Panc1 (cell line): ENCODE measurements at regions of chr1 and their contacts with region 1.

Region 1: DNA sequence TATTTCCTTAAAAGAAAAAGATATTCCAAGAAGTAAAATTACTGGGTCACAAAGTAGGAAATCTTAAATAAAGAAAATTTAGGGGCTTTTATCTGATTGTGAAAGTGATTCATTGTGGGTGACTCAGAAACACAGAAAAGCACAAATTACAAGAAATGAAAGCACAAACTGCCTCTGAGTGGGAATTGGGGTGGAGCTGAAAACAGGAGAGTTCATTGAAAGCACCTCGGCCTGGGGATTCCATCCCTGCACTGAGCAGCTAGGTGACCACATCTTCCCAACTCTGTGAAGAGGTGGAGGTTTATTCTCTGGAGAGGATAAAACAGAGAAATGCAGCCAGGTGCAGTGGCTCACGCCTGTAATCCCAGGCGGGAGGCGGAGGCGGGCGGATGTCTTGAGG is 7.4 kb downstream of the GJA4 start:
- DNase-seq: no peak
- ATAC-seq: no peak
- H3K4me3 ChIP-seq: no peak overlapping the region
- H3K27ac ChIP-seq: no peak overlapping the region
- H3K4me1 ChIP-seq: no peaks in the 10 kb centered on the region
- H3K27me3 ChIP-seq: no peaks in the 10 kb centered on the region
- CTCF ChIP-seq: no peak

Region 2: DNA sequence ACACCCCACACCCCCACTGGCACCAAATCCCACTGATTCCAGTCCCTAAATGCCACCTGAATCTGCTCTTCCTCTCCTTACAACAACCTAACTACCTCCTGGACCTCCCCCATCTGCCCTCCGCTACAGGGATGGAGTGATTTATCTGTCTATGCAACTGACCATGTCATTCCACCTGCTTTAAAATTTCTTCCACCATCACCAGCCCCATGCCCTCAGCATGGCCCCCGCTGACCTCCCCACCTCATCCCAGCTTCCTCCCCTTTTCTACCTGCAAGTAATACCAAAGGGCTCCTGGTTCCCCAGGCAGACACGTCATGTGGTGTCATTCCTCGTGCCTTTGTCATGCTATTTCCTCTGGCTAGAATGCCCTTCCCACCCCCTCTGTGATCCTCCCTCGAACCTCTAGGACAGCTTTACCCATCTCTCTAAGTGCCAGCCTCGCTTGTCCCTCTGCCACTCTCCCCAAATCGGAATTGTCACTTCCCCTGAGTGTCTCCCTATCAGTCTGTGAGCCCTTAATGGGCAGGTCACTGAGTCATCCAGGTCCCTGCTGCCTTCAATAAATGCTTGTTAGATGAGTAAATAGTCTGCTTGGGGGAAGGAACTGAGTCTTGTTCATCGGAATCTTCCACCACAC is 37.0 kb before region 1 on chr1:
- CTCF ChIA-PET with region 1: no interaction called
- POLR2A ChIA-PET with region 1: no interaction called
- in situ Hi-C with region 1: no loop called
- intact Hi-C with region 1: no loop called
- DNase-seq: peak; percentile 82
- ATAC-seq: peak; percentile 89
- H3K4me3 ChIP-seq: no peak overlapping the region
- H3K27ac ChIP-seq: no peak overlapping the region
- H3K4me1 ChIP-seq: no peaks in the 10 kb centered on the region; the same call in 1 of the 2 replicates
- H3K27me3 ChIP-seq: no peaks in the 10 kb centered on the region
- CTCF ChIP-seq: no peak

Region 3: GRCh38 chr1:36771660-36772284 is 1971.6 kb after region 1 on chr1:
- CTCF ChIA-PET with region 1: no interaction called
- POLR2A ChIA-PET with region 1: no interaction called
- in situ Hi-C with region 1: no loop called
- intact Hi-C with region 1: loop called (anchors 10 kb)
- DNase-seq: no peak
- ATAC-seq: no peak
- H3K4me3 ChIP-seq: no peak overlapping the region
- H3K27ac ChIP-seq: no peak overlapping the region
- H3K4me1 ChIP-seq: no peaks in the 10 kb centered on the region
- H3K27me3 ChIP-seq: peaks cover 2% of the 10 kb centered on the region; the same call in 1 of the 2 replicates
- CTCF ChIP-seq: no peak